CD4-positive, alpha-beta T cell (primary cell): ENCODE measurements at regions of chr3 and their contacts with region 1.

Region 1: DNA sequence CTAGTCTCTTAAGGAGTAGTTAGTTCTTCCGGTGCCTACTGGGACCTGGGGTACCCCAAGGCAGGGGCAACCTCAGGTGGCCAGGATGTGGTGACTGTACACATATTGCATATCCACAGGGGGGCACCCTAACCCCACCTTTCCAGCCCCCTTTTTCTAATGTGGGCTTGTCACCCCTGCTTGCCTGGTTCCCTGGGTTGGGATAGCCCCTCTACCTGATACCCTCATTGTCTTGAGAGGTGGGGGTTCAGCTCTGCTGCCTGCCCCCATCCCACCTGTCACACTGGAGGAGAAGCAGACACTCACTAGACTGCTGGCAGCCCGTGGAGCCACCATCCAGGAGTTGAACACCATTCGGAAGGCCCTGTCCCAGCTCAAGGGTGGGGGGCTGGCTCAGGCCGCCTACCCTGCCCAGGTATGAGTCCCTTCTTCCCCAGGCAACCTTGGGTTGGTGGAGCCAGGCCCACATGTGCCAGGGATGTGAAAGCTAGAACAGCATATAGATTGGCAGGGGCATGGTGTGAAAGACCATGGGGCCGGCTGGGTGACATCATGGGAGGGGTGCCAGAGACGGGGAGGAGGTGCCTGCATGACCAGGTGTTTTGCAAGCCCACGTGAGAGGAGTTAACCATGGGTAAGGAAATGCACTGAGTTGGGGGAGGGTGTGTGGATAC is 4.0 kb downstream of the GLYCTK start:
- DNase-seq: peak in 12 of 14 experiments; percentile 19 to 66 (median 44)
- ATAC-seq: no peak
- H3K4me3 ChIP-seq: no peak overlapping the region
- H3K4me3 Mint-ChIP-seq: peak overlapping the region; percentile 80
- H3K27ac ChIP-seq: no peak overlapping the region
- H3K27ac Mint-ChIP-seq: peak overlapping the region; percentile 80
- H3K4me1 ChIP-seq: peaks cover 46% of the 10 kb centered on the region
- H3K4me1 Mint-ChIP-seq: peaks cover 38% of the 10 kb centered on the region
- H3K27me3 ChIP-seq: no peaks in the 10 kb centered on the region
- H3K27me3 Mint-ChIP-seq: no peaks in the 10 kb centered on the region
- CTCF ChIP-seq: peak; percentile 53

Region 2: DNA sequence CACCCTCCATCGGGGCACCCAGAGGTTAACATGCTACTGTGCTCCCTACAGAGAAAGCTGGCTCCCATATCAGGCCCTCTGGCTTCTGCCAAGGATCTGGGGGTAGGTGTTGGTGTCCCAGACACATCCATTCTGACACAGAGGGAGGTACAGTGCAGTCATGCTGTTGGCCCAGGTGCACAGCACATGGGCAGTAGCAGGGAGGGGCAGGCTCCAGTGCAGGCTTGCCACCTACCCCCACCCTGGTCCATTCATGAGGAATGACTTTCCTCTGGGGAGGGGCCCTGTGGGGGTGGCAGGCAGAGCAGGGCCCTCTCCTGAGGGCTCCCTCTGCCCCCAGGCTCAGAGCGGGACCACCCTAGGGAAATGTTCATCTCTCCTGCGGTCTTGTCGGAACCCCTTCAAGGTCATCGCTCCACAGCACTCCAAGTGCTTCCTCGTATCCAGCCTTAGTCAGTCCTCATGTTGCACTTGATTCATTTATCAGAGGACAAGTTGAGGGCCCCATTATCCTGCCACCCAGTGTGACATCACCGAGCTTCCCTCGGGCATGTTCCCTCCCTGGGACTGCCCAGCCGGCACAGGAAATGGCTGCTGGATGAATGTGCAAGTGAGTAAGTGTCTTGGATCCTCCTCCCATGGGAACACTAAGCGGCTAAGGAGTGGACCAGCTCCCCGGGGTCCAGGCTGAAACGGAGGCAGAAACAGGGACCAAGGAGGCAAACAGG is 245.3 kb before region 1 on chr3:
- CTCF ChIA-PET with region 1: no interaction called
- POLR2A ChIA-PET with region 1: no interaction called
- intact Hi-C with region 1: no loop called
- DNase-seq: no peak
- ATAC-seq: no peak
- H3K4me3 ChIP-seq: no peak overlapping the region
- H3K4me3 Mint-ChIP-seq: no peak overlapping the region
- H3K27ac ChIP-seq: peak overlapping the region in 1 of 2 donors; percentile 16
- H3K27ac Mint-ChIP-seq: peak overlapping the region; percentile 59
- H3K4me1 ChIP-seq: peaks cover 74% of the 10 kb centered on the region
- H3K4me1 Mint-ChIP-seq: peaks cover 44% of the 10 kb centered on the region
- H3K27me3 ChIP-seq: no peaks in the 10 kb centered on the region
- H3K27me3 Mint-ChIP-seq: no peaks in the 10 kb centered on the region
- CTCF ChIP-seq: no peak

Region 3: DNA sequence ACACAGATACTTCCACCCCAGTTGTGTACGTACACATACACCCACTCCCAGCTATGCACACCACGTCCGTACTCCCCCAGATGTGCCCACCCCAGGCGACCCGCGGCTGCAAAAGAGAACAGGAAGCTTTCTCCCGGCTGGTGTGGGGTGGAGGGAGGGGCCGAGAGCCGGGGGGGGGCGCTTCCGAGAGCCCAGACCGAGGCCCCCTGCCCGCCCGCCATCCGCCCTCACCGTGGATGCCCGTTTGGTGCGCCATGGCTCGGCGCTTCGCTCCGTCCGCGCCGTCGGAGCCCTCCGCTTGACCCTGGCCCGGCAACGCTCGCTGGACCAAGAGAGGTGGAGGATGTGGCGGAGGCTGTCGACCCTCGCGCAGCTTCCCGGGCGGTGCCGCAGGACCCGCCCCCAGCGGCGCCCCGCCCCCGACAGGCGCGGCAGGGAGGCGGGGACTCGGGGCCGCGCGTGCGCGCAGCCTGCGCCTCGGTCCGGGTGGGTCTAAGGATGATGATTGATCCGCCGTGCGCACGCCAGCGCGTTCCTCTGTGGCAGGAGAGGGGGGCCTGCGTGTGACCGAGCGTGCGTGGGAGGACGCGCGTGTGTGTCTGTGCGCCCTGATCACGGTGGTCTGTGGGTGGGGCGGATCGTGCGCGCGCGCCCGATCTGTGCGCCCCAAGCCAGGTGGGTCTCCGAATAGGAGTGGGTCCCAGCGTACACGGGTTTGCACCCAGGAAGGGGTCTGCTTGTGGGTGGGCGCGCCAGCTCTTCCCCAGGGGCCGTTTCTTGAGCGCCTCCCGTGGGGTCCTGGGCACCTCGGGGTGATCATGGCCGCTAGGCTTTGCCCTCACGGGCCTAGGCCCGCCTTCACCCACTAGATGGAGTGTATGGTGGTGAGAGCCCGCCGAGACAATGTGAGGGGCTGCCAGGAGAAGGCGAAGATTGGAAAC is 52.6 kb before region 1 on chr3 and contains the start of gene TWF2:
- CTCF ChIA-PET with region 1: interaction called, 4 read pairs
- POLR2A ChIA-PET with region 1: interaction called, 8 read pairs
- intact Hi-C with region 1: loop called in 1 of 2 experiments (anchors 2 kb)
- DNase-seq: peak; percentile 69 to 93 (median 84)
- ATAC-seq: peak; percentile 79
- H3K4me3 ChIP-seq: peak within 1 kb of the TSS; percentile 99
- H3K4me3 Mint-ChIP-seq: peak within 1 kb of the TSS; percentile 99
- H3K27ac ChIP-seq: peak within 1 kb of the TSS; percentile 81 to 95
- H3K27ac Mint-ChIP-seq: peak within 1 kb of the TSS; percentile 99
- H3K4me1 ChIP-seq: peaks cover 80% of the 10 kb centered on the region
- H3K4me1 Mint-ChIP-seq: peaks cover 86% of the 10 kb centered on the region
- H3K27me3 ChIP-seq: no peaks in the 10 kb centered on the region
- H3K27me3 Mint-ChIP-seq: no peaks in the 10 kb centered on the region
- CTCF ChIP-seq: peak; percentile 63
- total RNA-seq, gene TWF2: 17.4 to 21.7 TPM

Region 4: DNA sequence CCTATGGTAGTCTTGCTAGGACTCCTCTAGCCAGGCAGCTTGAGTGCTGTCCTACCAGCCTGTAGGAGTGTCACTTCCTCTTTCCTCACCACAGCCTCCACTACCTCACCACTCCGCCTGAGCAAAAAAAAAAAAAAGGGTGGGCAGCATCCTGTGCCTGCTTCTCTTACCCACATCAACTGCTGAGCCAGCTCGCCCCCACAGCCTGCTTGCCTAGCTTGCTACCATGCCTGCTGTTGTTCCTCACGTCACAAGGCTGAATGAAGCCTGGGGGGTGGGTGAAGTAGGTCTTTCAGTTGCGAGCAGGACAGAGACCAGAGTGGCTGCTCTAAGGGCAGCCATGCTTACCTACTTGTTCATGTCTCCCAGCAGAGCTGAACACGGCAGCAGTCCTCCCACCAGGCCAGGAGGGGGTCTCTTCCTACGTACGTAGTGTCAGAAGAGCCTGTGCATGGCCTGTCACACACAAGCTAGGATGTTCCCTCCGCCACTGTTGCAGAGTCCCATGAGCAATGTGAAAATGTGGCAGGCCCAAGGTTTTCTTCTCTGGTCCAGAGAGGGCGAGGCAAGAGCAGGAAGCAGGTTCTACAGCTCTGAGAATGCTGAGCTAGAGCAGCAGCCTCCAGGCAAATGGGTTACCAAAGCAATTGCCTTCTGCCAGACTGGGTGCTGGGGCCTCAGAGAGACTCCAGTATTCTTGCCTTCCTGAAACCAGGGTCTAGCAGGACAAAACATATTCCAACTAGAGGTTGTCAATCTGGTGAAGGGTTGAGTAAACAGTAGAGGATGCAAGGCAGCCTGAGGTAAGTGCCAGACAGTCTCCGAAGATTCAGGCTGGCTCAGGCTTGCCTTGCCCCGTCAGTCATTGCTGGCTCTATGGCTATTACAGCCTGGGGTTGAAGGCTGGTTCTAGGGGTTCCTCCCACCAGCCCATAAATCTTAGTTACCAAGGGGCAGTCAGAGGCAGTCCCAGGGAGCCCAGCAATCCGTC is 38.0 kb before region 1 on chr3:
- CTCF ChIA-PET with region 1: no interaction called
- POLR2A ChIA-PET with region 1: interaction called, 42 read pairs
- intact Hi-C with region 1: no loop called
- DNase-seq: peak; percentile 73 to 95 (median 82)
- ATAC-seq: peak; percentile 83
- H3K4me3 ChIP-seq: peak overlapping the region; percentile 30
- H3K4me3 Mint-ChIP-seq: peak overlapping the region; percentile 89
- H3K27ac ChIP-seq: peak overlapping the region; percentile 82 to 89
- H3K27ac Mint-ChIP-seq: peak overlapping the region; percentile 95
- H3K4me1 ChIP-seq: peaks cover 100% of the 10 kb centered on the region
- H3K4me1 Mint-ChIP-seq: peaks cover 93% of the 10 kb centered on the region
- H3K27me3 ChIP-seq: no peaks in the 10 kb centered on the region
- H3K27me3 Mint-ChIP-seq: no peaks in the 10 kb centered on the region
- CTCF ChIP-seq: no peak

Region 5: DNA sequence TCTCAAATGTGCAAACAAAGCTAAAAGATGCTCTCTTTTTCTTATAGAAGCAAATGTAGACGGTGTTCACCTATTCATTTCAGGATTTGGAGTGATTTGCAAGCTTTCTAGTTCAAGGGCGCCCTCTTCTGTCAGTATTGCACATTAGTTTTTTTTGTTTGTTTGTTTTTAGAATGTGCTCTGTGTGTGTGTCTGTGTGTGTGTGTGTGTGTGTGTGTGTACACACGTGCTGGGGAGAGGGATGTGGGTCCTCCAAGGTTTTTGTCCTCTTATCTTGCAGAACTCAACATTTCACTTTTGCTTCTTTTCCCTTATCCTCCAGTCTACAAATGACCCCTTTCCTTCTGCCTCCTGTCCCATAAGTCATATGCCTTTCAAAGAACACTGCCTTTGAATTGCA is 48.0 kb after region 1 on chr3:
- CTCF ChIA-PET with region 1: interaction called, 7 read pairs
- POLR2A ChIA-PET with region 1: interaction called, 3 read pairs
- intact Hi-C with region 1: loop called (anchors 1 kb)
- DNase-seq: peak in 13 of 14 experiments; percentile 7 to 87 (median 28)
- ATAC-seq: peak; percentile 76
- H3K4me3 ChIP-seq: no peak overlapping the region
- H3K4me3 Mint-ChIP-seq: no peak overlapping the region
- H3K27ac ChIP-seq: no peak overlapping the region
- H3K27ac Mint-ChIP-seq: no peak overlapping the region
- H3K4me1 ChIP-seq: no peaks in the 10 kb centered on the region
- H3K4me1 Mint-ChIP-seq: peaks cover 11% of the 10 kb centered on the region
- H3K27me3 ChIP-seq: no peaks in the 10 kb centered on the region
- H3K27me3 Mint-ChIP-seq: no peaks in the 10 kb centered on the region
- CTCF ChIP-seq: peak; percentile 85

Region 6: DNA sequence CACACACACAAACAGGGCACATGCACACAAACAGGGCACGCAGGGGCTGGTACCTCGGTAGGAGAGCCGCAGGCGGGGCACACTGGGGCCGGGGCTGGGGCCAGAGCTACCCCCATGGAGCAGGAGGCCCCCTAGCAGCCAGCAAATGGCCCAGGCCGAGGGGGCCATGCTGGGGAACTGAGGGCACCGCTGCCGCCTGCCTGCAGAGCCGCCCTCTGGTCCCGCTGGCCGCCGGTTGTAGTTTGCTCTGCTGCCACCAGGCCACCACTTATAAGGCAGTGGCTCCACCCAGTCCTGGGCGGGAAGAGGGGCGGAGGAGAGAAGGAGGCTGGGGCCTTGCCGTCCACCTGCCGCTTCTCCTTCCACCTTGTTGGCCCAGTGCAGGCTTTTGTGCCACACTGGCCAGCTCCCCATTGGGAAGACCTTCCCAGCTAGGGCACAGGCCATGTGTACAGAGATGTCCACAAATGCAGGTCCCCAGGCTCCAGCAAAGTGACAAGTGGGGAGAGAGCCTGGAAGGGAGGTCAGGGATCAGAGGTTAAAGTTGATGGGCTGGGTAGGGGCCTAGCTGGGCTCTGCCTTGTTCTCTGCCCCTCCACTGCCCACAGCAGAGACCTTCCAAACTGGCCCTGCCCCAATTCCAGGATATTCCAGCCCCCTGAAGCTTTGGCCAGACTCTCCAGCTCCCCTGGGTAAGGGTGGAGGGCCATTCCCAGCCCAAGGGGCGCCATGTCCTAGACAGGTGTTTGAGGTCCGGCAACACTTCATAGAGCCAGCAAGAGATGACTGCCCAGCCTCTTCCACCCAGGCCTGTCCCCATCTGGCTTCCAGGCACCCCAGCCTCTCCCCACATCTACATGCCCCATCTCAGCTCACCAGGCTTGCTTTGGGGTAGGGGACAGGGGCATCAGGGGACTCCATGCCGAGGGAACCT is 153.5 kb after region 1 on chr3 and contains the start of gene SEMA3G:
- CTCF ChIA-PET with region 1: no interaction called
- POLR2A ChIA-PET with region 1: no interaction called
- intact Hi-C with region 1: loop called (anchors 5 to 10 kb)
- DNase-seq: peak; percentile 55 to 86 (median 70)
- ATAC-seq: peak; percentile 96
- H3K4me3 ChIP-seq: peak within 1 kb of the TSS; percentile 29
- H3K4me3 Mint-ChIP-seq: no peak within 1 kb of the TSS
- H3K27ac ChIP-seq: no peak within 1 kb of the TSS
- H3K27ac Mint-ChIP-seq: no peak within 1 kb of the TSS
- H3K4me1 ChIP-seq: peaks cover 28% of the 10 kb centered on the region
- H3K4me1 Mint-ChIP-seq: peaks cover 14% of the 10 kb centered on the region
- H3K27me3 ChIP-seq: no peaks in the 10 kb centered on the region
- H3K27me3 Mint-ChIP-seq: no peaks in the 10 kb centered on the region
- CTCF ChIP-seq: peak; percentile 32
- total RNA-seq, gene SEMA3G: 0.34 to 0.69 TPM